ENCODE measurements at regions of chr17 and their contacts with region 1.

Region 1: GRCh38 chr17:44218344-44219107 is 949 bp downstream of the UBTF start:
- DNase-seq: peak; percentile 72
- ATAC-seq: peak; percentile 30
- H3K4me3 Mint-ChIP-seq: peak overlapping the region; percentile 82
- H3K27ac Mint-ChIP-seq: no peak overlapping the region
- H3K4me1 Mint-ChIP-seq: peaks cover 17% of the 10 kb centered on the region
- H3K27me3 Mint-ChIP-seq: no peaks in the 10 kb centered on the region
- CTCF ChIP-seq: peak; percentile 26; the same call in 1 of the 2 replicates

Region 2: GRCh38 chr17:44279666-44280391 is 61.3 kb after region 1 on chr17:
- CTCF ChIA-PET with region 1: interaction called, 14 read pairs
- POLR2A ChIA-PET with region 1: interaction called, 6 read pairs
- DNase-seq: peak; percentile 80
- ATAC-seq: peak; percentile 96
- H3K4me3 Mint-ChIP-seq: peak overlapping the region; percentile 19; the same call in 1 of the 2 replicates
- H3K27ac Mint-ChIP-seq: peak overlapping the region; percentile 96
- H3K4me1 Mint-ChIP-seq: peaks cover 21% of the 10 kb centered on the region
- H3K27me3 Mint-ChIP-seq: no peaks in the 10 kb centered on the region; the same call in 1 of the 2 replicates
- CTCF ChIP-seq: no peak

Region 3: GRCh38 chr17:44314869-44315661 is 96.5 kb after region 1 on chr17:
- CTCF ChIA-PET with region 1: interaction called, 73 read pairs
- POLR2A ChIA-PET with region 1: interaction called, 28 read pairs
- DNase-seq: peak; percentile 76
- ATAC-seq: peak; percentile 13
- H3K4me3 Mint-ChIP-seq: peak overlapping the region; percentile 79
- H3K27ac Mint-ChIP-seq: no peak overlapping the region
- H3K4me1 Mint-ChIP-seq: peaks cover 39% of the 10 kb centered on the region
- H3K27me3 Mint-ChIP-seq: peaks cover 37% of the 10 kb centered on the region
- CTCF ChIP-seq: no peak

Region 4: DNA sequence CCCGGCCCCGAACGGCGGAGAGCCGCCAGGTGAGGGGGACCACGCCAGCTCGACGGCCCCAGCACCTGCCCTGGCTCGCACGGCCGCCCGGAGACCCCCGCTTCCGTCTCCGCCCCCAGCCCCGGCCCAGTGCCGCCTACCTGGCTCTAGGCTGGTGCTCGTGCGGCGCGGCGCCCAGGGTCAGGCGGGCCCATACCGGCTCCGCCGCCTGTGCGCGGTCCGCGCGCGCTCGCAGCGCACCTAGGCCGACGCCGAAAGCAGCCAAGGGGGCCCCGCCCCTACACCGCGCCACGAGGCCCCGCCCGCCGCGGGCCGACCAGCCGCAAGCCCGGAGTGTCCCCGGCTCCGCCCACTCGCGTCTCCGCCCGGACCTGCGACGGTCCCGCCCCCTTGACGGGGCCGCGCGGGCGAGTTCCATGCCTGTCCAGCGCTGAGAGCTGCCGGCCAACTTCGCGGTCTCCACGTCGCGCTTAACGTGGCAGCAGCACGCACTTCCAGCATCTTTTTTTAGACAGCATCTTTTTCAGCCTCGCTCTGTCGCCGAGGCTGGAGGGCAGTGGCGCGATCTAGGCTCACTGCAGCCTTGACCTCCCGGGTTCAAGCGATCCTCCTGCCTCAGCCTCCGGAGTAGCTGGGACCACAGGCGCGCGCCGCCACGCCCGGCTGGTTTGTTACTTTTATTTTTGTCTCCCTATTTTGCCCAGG is 106.2 kb after region 1 on chr17 and contains the start of gene SLC25A39:
- CTCF ChIA-PET with region 1: interaction called, 20 read pairs
- POLR2A ChIA-PET with region 1: interaction called, 13 read pairs
- DNase-seq: peak; percentile 94
- ATAC-seq: peak; percentile 71
- H3K4me3 Mint-ChIP-seq: peak within 1 kb of the TSS; percentile 86
- H3K27ac Mint-ChIP-seq: peak within 1 kb of the TSS; percentile 76
- H3K4me1 Mint-ChIP-seq: peaks cover 13% of the 10 kb centered on the region
- H3K27me3 Mint-ChIP-seq: peaks cover 8% of the 10 kb centered on the region
- CTCF ChIP-seq: no peak
- total RNA-seq, gene SLC25A39: 254 to 271 TPM (median 268 TPM) in 3 replicates

Region 5: DNA sequence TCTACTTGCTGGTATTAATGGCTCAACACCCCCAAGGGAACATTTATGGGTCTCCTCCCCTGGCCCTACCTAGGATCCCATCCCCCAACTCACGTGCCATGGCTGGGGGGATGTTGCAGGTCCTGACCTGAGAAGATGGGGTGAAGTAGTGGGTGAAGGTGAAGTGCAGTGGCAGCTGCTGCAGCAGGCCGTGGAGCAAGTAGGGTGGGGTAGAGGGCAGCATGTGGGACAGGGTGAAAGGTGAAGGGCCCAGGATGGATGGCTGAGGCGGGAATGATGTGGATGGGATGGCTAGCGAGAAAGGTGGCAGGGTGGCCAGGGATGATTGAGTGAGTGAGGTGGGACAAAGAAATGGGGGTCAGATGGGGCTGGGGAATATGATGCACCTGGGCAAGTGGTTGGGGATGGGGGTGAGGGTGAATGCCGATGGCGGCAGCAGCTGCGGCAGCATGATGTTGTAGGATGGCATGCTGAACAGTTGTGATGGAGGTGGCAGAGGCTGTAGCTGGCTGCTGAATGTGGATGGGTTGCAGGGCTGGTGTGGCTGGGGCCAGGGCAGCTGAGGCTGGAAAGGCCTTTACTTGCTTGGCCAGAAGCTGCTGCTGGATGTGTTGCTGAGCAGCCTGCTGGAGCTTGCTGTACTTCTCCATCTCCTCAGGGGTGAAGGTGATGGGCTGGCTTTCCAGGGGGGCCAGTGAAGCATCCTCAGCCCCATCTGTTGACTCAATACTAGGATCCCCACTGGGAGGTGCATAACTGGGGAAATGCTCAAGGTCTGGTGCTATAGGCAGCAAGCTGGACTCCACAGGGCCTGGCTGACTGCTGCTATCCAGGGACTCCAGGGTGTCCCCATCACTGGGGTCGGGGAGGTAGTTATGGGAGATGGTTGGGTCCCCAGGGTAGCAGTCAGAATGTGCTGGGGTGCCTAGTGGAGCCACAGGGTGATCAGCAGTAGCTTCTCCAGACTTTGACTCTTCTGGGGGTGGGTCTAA is 179.2 kb after region 1 on chr17:
- CTCF ChIA-PET with region 1: no interaction called
- POLR2A ChIA-PET with region 1: no interaction called
- DNase-seq: no peak
- ATAC-seq: no peak
- H3K4me3 Mint-ChIP-seq: no peak overlapping the region
- H3K27ac Mint-ChIP-seq: no peak overlapping the region
- H3K4me1 Mint-ChIP-seq: peaks cover 10% of the 10 kb centered on the region
- H3K27me3 Mint-ChIP-seq: no peaks in the 10 kb centered on the region; the same call in 1 of the 2 replicates
- CTCF ChIP-seq: no peak

Measured in WTC11 (cell line).